ENCODE measurements at regions of chr20 and their contacts with region 1.

Region 1: DNA sequence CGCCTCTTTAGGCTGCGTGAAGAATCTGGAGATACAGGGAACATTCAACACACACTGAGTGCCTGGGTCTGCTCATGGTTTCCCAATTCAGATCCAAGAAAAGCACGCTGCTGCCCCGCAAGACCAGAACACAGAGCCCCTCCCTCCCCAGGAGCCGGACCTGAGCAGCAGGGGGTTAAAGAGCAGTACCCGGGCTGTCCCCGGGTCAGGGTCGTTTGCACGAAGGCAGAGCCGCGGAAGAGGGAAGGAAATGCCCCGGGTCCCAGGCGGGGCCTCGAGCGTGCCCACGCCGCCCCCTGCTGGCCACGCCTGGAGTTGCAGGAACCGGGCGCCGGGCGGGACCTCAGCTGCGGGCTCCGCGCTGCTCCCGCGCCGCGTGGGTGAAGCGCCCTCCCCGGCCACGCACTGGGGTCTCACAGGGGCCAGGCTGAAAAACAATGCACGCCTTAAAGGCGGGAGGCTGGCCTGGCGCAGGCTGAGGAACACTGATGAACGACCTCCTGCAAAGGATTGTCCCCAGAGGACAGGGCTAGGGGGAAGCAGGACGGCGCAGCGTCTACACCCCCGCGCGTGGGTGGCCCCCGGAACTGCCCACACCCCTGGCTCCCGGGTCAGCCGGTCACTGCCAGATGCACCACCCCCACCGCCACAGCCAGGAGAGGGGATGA is 48.9 kb downstream of the ANKRD60 start:
- DNase-seq: peak; percentile 62

Region 2: DNA sequence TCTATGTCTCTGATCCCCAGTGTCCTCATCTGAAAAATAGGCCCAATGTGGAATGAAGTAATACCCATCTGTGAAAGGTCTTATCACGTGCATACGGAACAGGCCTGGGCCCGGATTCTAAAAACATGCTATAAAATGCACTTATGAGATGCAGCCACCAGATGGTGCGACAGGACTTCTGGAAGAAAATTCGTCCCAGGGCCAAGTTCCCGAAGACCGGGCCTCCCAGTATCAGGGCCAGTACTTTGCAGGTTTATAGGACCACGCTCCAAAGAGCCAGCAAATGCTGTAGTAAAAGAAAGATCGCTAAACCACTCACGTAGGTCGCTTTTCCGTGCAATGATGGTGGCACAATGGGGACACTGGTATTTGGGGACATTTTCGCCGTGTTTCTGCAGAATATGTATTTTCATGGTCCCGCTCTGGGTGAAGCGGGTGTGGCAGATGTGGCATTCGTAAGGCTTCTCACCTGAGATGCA is 665.3 kb before region 1 on chr20:
- in situ Hi-C with region 1: loop called (anchors 10 kb)
- DNase-seq: peak; percentile 44

Region 3: DNA sequence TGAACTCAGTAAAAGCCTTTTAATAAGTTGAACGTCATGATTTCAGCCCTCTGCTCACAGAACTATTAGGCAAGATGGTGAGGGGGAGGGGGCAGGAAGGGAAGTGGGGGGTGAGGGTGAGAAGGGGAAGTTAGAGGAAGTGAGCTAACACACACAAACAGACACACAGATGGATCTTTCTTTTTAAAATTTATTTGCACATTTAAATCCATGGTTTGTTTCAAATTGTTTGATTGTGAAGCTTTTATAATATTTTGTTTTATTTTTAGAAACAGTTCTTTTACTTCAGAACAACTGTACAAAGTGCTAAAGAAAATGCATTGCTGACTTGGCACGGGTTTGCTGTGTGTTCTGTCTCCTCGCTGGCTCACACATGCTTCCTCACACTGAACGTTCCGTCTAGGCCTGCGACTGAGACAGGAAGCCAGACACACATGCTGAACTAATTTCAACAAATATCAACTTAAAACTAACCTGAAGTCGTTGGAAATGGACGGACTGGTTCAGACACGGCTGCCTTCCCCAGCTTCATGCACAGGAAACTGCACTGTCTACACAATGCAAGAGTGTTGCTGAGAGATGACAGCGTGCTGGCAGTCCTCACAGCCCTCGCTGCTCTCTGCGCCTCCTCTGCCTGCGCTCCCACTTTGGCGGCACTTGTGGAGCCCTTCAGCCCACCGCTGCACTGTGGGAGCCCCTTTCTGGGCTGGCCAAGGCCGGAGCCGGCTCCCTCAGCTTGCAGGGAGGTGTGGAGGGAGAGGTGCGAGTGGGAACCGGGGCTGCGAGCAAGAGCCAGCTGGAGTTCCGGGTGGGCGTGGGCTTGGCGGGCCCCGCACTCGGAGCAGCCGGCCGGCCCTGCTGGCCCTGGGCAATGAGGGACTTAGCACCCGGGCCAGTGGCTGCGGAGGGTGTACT is 551.3 kb before region 1 on chr20:
- in situ Hi-C with region 1: loop called (anchors 25 kb)
- DNase-seq: no peak